ENCODE measurements at regions of chr7 and their contacts with region 1.

Region 1: DNA sequence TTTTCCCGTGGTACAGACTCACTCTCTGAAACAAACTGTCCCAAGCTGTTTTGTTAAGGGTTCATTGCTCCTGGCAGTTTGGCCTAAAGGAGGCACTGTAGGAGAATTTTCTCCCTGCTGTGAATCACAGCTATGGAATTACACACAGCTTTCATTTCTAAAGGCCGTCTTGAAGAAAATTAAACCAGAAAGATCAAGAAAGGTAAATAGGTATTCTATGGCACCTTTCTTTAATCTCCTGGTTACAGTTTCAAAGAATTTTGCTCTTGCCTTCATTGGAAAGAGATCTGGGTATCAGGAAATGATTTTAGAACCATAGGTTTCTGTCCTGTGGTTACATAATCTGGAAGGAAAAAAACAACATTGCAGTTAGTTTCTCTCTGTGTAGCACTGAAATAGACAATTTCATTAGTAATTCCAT is 51.2 kb downstream of the PDK4 start:
- DNase-seq: peak; percentile 83
- H3K4me3 ChIP-seq: peak overlapping the region in 2 of 3 experiments; percentile 26 to 69
- H3K27ac ChIP-seq: peak overlapping the region; percentile 1
- H3K4me1 ChIP-seq: peaks cover 9% of the 10 kb centered on the region
- H3K27me3 ChIP-seq: peaks cover 0 to 5% of the 10 kb centered on the region in 2 experiments
- CTCF ChIP-seq: peak; percentile 54 to 74
- POLR2A ChIP-seq: no peak

Region 2: GRCh38 chr7:95527033-95527775 is 17.9 kb before region 1 on chr7:
- CTCF ChIA-PET with region 1: interaction called, 28 read pairs
- POLR2A ChIA-PET with region 1: no interaction called
- dilution Hi-C with region 1: no loop called
- intact Hi-C with region 1: no loop called
- DNase-seq: peak; percentile 52
- H3K4me3 ChIP-seq: no peak overlapping the region
- H3K27ac ChIP-seq: no peak overlapping the region
- H3K4me1 ChIP-seq: peaks cover 2% of the 10 kb centered on the region
- H3K27me3 ChIP-seq: peaks cover 12 to 13% of the 10 kb centered on the region in 2 experiments
- CTCF ChIP-seq: peak; percentile 75 to 78
- POLR2A ChIP-seq: no peak

Region 3: DNA sequence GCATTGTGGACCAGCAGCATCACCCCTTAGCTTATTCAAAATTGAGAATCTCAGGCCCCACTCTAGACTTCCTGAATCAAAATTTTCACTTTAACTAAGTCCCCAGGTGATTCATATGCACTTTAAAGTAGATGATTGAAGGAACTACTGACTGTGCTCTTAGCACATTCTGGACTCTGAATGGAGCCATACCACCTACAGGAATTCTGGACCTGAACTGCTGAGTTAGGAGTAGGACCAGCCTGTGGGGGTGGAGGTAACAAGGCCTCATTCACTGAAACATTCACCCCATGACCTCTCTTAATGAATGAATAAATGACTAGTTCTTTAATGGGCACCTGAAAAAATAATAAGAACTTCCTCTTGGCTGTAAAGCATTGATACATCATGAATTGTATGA is 43.9 kb after region 1 on chr7:
- CTCF ChIA-PET with region 1: interaction called, 5 read pairs
- POLR2A ChIA-PET with region 1: no interaction called
- dilution Hi-C with region 1: no loop called
- intact Hi-C with region 1: loop called (anchors 2 kb)
- DNase-seq: no peak
- H3K4me3 ChIP-seq: no peak overlapping the region
- H3K27ac ChIP-seq: no peak overlapping the region
- H3K4me1 ChIP-seq: no peaks in the 10 kb centered on the region
- H3K27me3 ChIP-seq: no peaks in the 10 kb centered on the region
- CTCF ChIP-seq: no peak
- POLR2A ChIP-seq: no peak

Region 4: GRCh38 chr7:95684037-95684436 is 138.9 kb after region 1 on chr7:
- CTCF ChIA-PET with region 1: interaction called, 917 read pairs
- POLR2A ChIA-PET with region 1: no interaction called
- dilution Hi-C with region 1: no loop called
- intact Hi-C with region 1: loop called (anchors 1 kb)
- DNase-seq: peak; percentile 48
- H3K4me3 ChIP-seq: no peak overlapping the region
- H3K27ac ChIP-seq: no peak overlapping the region
- H3K4me1 ChIP-seq: no peaks in the 10 kb centered on the region
- H3K27me3 ChIP-seq: peaks cover 0 to 2% of the 10 kb centered on the region in 2 experiments
- CTCF ChIP-seq: peak; percentile 11 to 16
- POLR2A ChIP-seq: no peak